ENCODE measurements at regions of chr17 and their contacts with region 1.

Region 1: GRCh38 chr17:49403514-49404289 is 11.0 kb downstream of the PHB1 start:
- DNase-seq: no peak

Region 2: GRCh38 chr17:49361902-49362722 is 41.6 kb before region 1 on chr17 and contains the start of gene ZNF652:
- intact Hi-C with region 1: loop called in 1 of 2 experiments (anchors 1 kb)
- DNase-seq: peak; percentile 95
- total RNA-seq, gene ZNF652: 39.0 to 40.9 TPM

Region 3: GRCh38 chr17:50345432-50346312 is 942.0 kb after region 1 on chr17 and contains the start of gene XYLT2:
- intact Hi-C with region 1: no loop called
- DNase-seq: peak; percentile 95
- total RNA-seq, gene XYLT2: 18.1 to 21.9 TPM